Activated CD4-positive, alpha-beta T cell treated with anti-CD3 and anti-CD28 coated beads for 36 hours (primary cell): ENCODE measurements at regions of chr22 and their contacts with region 1.

Region 1: GRCh38 chr22:35660291-35661127 is 12.3 kb downstream of the APOL6 start:
- DNase-seq: peak; percentile 56
- ATAC-seq: peak; percentile 75
- H3K4me3 Mint-ChIP-seq: no peak overlapping the region
- H3K27ac Mint-ChIP-seq: peak overlapping the region; percentile 88
- H3K4me1 Mint-ChIP-seq: peaks cover 75% of the 10 kb centered on the region
- H3K27me3 Mint-ChIP-seq: no peaks in the 10 kb centered on the region

Region 2: GRCh38 chr22:35498026-35498800 is 162.3 kb before region 1 on chr22:
- CTCF ChIA-PET with region 1: no interaction called
- POLR2A ChIA-PET with region 1: no interaction called
- intact Hi-C with region 1: no loop called
- DNase-seq: no peak
- ATAC-seq: no peak
- H3K4me3 Mint-ChIP-seq: no peak overlapping the region
- H3K27ac Mint-ChIP-seq: no peak overlapping the region
- H3K4me1 Mint-ChIP-seq: no peaks in the 10 kb centered on the region
- H3K27me3 Mint-ChIP-seq: peaks cover 33% of the 10 kb centered on the region

Region 3: GRCh38 chr22:35678836-35679235 is 18.3 kb after region 1 on chr22:
- CTCF ChIA-PET with region 1: interaction called, 6 read pairs
- POLR2A ChIA-PET with region 1: no interaction called
- intact Hi-C with region 1: loop called (anchors 1 to 2 kb)
- DNase-seq: no peak
- ATAC-seq: peak; percentile 62
- H3K4me3 Mint-ChIP-seq: no peak overlapping the region
- H3K27ac Mint-ChIP-seq: peak overlapping the region; percentile 44
- H3K4me1 Mint-ChIP-seq: peaks cover 22% of the 10 kb centered on the region
- H3K27me3 Mint-ChIP-seq: no peaks in the 10 kb centered on the region